AG04449 (cell line): ENCODE measurements at regions of chr5 and their contacts with region 1.

Region 1: GRCh38 chr5:38809388-38810359 is 36.1 kb upstream of the OSMR start:
- DNase-seq: peak; percentile 60
- H3K4me3 ChIP-seq: no peak overlapping the region
- CTCF ChIP-seq: peak; percentile 88

Region 2: DNA sequence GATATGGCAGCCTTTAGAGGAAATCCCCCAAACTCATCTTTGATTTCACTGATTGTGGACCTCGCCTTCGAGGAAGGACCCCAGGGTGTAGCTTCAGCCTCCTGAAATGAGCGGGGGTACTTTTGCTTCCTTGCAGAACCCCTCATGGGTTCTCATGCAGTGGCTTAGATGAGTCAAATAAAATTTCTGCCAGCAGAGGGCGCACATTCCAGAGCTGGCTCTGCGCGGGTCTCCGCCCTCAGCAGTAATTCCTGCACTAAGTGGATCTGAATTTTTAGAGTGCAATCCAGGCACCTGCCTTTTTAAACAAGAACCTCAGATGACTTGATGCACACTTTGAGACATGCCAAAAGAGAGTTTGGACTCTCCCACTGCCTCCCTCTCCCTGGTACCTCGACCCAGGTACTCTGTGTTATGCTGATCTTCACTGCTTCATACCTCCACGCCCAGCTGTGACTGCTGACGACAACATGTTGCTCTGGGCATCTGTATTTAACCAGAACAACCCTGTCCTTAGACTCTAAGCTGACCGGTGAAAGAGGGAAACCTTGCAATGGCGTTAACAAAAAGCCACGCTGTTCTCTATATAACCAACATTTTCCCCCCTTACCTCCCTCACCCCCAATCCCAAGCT is 544.0 kb before region 1 on chr5:
- CTCF ChIA-PET with region 1: interaction called, 41 read pairs
- POLR2A ChIA-PET with region 1: no interaction called
- DNase-seq: no peak
- H3K4me3 ChIP-seq: no peak overlapping the region
- CTCF ChIP-seq: peak; percentile 58

Region 3: DNA sequence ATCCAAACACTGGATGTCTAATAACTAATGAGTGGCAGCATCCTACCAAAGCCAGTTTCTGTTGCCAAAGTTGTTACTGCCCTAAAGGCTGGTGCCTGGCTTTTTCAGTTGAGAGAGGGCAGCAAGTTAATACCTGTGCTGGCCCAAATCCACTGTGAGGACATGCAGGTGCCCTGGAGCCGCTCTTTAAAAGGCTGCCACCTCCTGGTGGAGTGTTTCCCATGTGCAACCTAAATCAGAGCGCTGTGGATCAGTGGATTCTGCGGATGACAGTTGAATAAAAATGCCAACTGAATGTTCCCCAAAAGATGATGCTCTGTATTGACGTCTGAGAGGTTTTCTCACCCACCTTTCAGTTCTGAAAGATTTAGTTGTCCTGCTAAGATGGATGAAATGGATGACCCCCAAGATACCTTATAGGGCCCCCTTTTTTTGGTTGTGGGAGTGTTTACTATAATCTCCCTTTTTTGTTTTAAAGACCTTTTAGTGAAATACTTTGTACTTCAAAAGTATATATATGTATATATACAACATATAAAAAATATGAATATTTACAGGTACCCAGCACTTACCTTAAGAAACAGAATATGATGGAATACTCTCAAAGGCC is 404.9 kb before region 1 on chr5:
- CTCF ChIA-PET with region 1: interaction called, 13 read pairs
- POLR2A ChIA-PET with region 1: no interaction called
- DNase-seq: no peak
- H3K4me3 ChIP-seq: no peak overlapping the region
- CTCF ChIP-seq: no peak

Region 4: DNA sequence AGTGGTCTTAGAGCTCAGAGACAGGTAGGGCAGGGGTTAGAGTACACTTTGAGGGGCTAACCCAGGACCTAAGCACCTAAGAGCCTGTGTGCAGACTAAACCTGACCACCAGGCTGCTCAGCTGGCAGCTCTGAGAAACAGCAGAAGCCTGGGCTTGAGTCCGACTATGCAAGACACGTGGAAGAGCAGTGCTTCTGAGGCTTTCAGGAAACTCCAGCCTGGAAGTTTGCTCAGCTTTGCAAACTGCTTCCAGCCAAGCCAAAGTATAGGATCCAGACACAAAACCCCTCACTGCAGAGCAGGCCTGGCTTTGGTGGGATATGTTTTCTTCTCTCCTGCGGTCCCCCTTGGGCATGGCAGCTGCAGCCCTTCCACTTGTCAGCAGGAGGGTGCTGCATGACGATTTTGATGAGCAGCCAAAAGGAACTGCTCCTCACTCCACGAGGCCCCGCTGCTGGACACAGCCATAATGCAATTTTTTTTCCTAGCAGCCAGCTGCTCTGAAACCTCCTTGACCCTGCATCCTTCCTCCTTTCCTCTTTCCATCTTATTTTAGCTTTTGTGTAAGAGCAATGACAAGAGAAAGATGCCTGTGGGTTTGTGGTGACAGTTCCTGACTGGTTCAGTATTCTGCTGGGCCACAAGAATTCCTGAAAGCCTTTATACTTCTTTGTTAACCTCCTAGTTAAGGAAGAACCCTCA is 376.4 kb before region 1 on chr5:
- CTCF ChIA-PET with region 1: interaction called, 93 read pairs
- POLR2A ChIA-PET with region 1: interaction called, 4 read pairs
- DNase-seq: peak; percentile 77
- H3K4me3 ChIP-seq: no peak overlapping the region
- CTCF ChIP-seq: no peak

Region 5: GRCh38 chr5:38463634-38464521 is 345.8 kb before region 1 on chr5:
- CTCF ChIA-PET with region 1: interaction called, 16 read pairs
- POLR2A ChIA-PET with region 1: no interaction called
- DNase-seq: peak; percentile 79
- H3K4me3 ChIP-seq: no peak overlapping the region
- CTCF ChIP-seq: no peak

Region 6: GRCh38 chr5:38556599-38557305 is 252.9 kb before region 1 on chr5 and contains the start of gene LIFR:
- CTCF ChIA-PET with region 1: interaction called, 43 read pairs
- POLR2A ChIA-PET with region 1: no interaction called
- DNase-seq: no peak
- H3K4me3 ChIP-seq: peak within 1 kb of the TSS; percentile 76
- CTCF ChIP-seq: no peak

Region 7: DNA sequence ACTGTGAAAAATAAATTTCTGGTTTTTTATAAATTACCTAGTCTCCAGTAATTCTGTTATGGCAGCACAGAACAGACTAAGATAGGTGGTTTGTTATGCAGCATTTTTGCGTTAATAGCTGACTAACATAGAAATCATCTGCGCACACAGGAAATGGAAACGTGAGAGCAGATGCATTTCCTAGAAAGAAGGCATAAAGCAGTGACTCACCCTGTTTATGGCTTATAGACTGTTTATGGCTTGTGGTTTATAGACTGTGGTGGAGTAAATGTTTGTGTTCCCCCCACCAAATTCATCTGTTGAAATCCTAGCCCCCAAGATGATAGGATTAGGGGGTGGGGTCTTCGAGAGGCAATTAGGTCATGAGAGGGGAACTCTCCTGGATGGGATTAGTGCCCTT is 17.9 kb after region 1 on chr5:
- CTCF ChIA-PET with region 1: interaction called, 18 read pairs
- POLR2A ChIA-PET with region 1: no interaction called
- DNase-seq: no peak
- H3K4me3 ChIP-seq: no peak overlapping the region
- CTCF ChIP-seq: no peak

Region 8: GRCh38 chr5:38979535-38979934 is 169.9 kb after region 1 on chr5:
- CTCF ChIA-PET with region 1: no interaction called
- POLR2A ChIA-PET with region 1: no interaction called
- DNase-seq: no peak
- H3K4me3 ChIP-seq: no peak overlapping the region
- CTCF ChIP-seq: no peak

Region 9: DNA sequence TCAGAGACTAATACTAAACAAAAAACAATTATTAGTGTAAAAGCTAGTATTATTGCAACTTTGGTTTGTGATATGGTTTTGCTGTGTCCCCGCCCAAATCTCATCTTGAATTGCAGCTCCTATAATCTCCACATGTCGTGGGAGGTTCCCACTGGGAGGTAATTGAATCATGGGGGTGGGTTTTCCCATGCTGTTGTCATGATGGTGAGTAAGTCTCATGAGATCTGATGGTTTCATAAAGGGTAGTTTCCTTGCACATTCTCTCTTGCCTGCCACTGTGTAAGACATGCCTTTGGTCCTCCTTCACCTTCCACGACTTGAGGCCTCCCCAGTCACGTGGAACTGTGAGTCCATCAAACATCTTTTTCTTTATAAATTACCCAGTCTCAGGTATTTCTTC is 941.0 kb after region 1 on chr5:
- CTCF ChIA-PET with region 1: no interaction called
- POLR2A ChIA-PET with region 1: no interaction called
- DNase-seq: no peak
- H3K4me3 ChIP-seq: no peak overlapping the region
- CTCF ChIP-seq: no peak